ENCODE measurements at regions of chr12 and their contacts with region 1.

Region 1: GRCh38 chr12:4011597-4011996 is 138.4 kb upstream of the PARP11 start:
- DNase-seq: peak; percentile 98
- ATAC-seq: peak; percentile 55
- H3K4me3 ChIP-seq: peak overlapping the region in 1 of 3 experiments; percentile 46; a peak in 2 of 6 replicates
- H3K27ac ChIP-seq: peak overlapping the region; percentile 99
- H3K4me1 ChIP-seq: peaks cover 95% of the 10 kb centered on the region
- H3K27me3 ChIP-seq: no peaks in the 10 kb centered on the region
- CTCF ChIP-seq: peak; percentile 25
- EP300 ChIP-seq: peak; percentile 88 to 98; a peak in 3 of 4 replicates
- POLR2A ChIP-seq: peak; percentile 58 to 62
- RAD21 ChIP-seq: no peak

Region 2: DNA sequence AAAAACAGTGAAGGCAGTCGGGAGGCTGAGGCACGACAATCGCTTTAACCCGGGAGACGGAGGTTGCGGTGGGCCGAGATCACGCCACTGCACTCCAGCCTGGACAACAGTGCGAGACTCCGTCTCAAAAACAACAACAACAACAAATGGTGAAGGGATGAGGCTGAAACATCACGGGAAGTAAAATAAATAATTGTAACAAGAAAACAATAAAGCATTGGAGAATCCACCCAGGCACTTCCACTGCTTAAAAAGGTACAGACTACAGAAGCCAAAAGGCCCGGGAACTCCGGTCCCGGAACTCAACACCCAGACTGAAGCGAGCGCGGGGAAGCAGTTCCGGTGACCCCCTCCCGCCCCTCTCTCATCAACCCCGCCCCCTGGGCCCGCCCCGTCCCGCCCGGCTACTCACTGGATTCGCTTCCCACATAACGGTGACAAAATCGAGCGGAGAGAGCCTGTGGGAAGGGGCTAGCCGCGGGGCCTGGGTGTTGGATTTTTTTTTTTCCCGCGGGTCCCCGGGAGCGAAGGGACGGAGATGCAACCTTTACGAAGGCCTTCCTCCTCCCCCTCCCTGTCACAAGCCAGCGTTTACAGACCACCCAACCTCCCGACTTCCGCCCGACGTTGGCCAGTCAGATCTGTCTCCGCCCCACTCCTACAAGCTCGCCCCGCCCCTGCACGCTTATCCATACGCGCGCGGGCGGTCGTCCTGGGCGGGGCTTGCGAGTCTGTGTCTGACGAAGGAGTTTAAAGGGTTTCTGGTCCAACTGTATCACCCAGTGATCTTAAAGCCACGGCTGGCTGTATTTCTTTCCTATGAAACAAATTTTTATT is 138.6 kb before region 1 on chr12 and contains the start of gene PARP11:
- CTCF ChIA-PET with region 1: no interaction called
- POLR2A ChIA-PET with region 1: interaction called, 9 read pairs
- in situ Hi-C with region 1: no loop called
- intact Hi-C with region 1: loop called (anchors 10 kb)
- DNase-seq: peak; percentile 91
- ATAC-seq: peak; percentile 99
- H3K4me3 ChIP-seq: peak within 1 kb of the TSS; percentile 71 to 97 (median 88)
- H3K27ac ChIP-seq: peak within 1 kb of the TSS; percentile 89
- H3K4me1 ChIP-seq: peaks cover 32% of the 10 kb centered on the region
- H3K27me3 ChIP-seq: no peaks in the 10 kb centered on the region; a peak in 1 of 5 replicates
- CTCF ChIP-seq: no peak
- EP300 ChIP-seq: 0 out of 4 replicates have a peak, but pooled peaks of 1 of the 2 experiments have one; percentile 4
- POLR2A ChIP-seq: peak; percentile 59 to 71; a peak in 3 of 4 replicates
- RAD21 ChIP-seq: no peak
- total RNA-seq, gene PARP11: 7.6 and 11.5 TPM in 2 replicates

Region 3: DNA sequence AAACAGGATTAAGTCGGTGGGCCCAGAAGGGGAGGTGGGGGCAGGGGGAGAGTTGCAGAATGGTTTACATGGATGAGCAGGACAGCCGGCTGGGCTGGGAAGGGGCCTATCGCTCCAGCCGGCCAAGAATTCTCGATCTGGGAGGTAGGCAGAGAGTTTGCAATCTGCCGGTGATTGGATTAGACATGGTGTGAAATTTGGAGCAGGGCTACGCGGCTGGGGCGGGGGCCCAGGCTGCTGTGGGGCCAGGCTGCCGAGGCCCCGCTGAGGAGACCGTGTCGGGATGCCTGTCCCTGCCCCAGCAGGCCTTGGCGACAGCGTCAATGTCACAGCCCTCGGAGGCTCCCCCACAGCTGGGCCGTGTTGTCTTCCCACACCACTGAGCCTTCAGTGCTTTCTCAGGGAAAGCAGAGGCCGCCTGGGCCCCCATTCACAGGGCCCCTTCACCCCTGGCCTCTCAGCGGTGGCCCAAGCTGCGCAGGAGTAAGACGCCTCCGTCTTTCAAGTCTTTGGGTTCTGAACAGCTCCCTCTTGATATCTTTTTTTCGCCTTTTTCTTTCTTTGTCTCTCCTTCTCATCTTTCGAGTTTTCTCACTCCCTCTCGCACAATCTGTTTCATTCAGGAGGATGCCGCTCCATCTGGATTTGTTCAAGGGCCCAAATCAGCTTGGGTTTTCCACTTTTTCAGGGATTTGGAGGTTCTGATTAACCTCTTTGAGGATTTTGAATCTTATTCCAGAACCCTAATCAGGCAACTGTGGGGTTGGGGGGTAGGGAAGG is 20.9 kb before region 1 on chr12:
- CTCF ChIA-PET with region 1: no interaction called
- POLR2A ChIA-PET with region 1: interaction called, 30 read pairs
- in situ Hi-C with region 1: no loop called
- intact Hi-C with region 1: no loop called
- DNase-seq: no peak
- ATAC-seq: no peak
- H3K4me3 ChIP-seq: no peak overlapping the region
- H3K27ac ChIP-seq: no peak overlapping the region
- H3K4me1 ChIP-seq: peaks cover 29% of the 10 kb centered on the region
- H3K27me3 ChIP-seq: no peaks in the 10 kb centered on the region; a peak in 1 of 5 replicates
- CTCF ChIP-seq: no peak
- EP300 ChIP-seq: no peak
- POLR2A ChIP-seq: no peak
- RAD21 ChIP-seq: no peak

Region 4: GRCh38 chr12:3998968-3999826 is 12.4 kb before region 1 on chr12:
- CTCF ChIA-PET with region 1: no interaction called
- POLR2A ChIA-PET with region 1: interaction called, 135 read pairs
- in situ Hi-C with region 1: no loop called
- intact Hi-C with region 1: loop called (anchors 2 kb)
- DNase-seq: peak; percentile 88
- ATAC-seq: peak; percentile 86
- H3K4me3 ChIP-seq: no peak overlapping the region; a peak in 1 of 6 replicates
- H3K27ac ChIP-seq: peak overlapping the region; percentile 89
- H3K4me1 ChIP-seq: peaks cover 52% of the 10 kb centered on the region
- H3K27me3 ChIP-seq: no peaks in the 10 kb centered on the region
- CTCF ChIP-seq: no peak
- EP300 ChIP-seq: peak; percentile 53 to 67; a peak in 2 of 4 replicates
- POLR2A ChIP-seq: 0 out of 4 replicates have a peak, but pooled peaks of 1 of the 2 experiments have one; percentile 27
- RAD21 ChIP-seq: no peak

Region 5: GRCh38 chr12:4030929-4031702 is 19.5 kb after region 1 on chr12:
- CTCF ChIA-PET with region 1: no interaction called
- POLR2A ChIA-PET with region 1: interaction called, 87 read pairs
- in situ Hi-C with region 1: no loop called
- intact Hi-C with region 1: loop called (anchors 2 kb)
- DNase-seq: peak; percentile 55
- ATAC-seq: peak; percentile 42
- H3K4me3 ChIP-seq: no peak overlapping the region
- H3K27ac ChIP-seq: no peak overlapping the region
- H3K4me1 ChIP-seq: peaks cover 58% of the 10 kb centered on the region
- H3K27me3 ChIP-seq: no peaks in the 10 kb centered on the region
- CTCF ChIP-seq: no peak
- EP300 ChIP-seq: no peak
- POLR2A ChIP-seq: no peak
- RAD21 ChIP-seq: no peak

Region 6: GRCh38 chr12:4037747-4038312 is 26.2 kb after region 1 on chr12:
- CTCF ChIA-PET with region 1: no interaction called
- POLR2A ChIA-PET with region 1: interaction called, 14 read pairs
- in situ Hi-C with region 1: no loop called
- intact Hi-C with region 1: loop called (anchors 2 kb)
- DNase-seq: peak; percentile 44
- ATAC-seq: peak; percentile 35; the same call in 1 of the 3 replicates
- H3K4me3 ChIP-seq: no peak overlapping the region
- H3K27ac ChIP-seq: no peak overlapping the region
- H3K4me1 ChIP-seq: peaks cover 48% of the 10 kb centered on the region
- H3K27me3 ChIP-seq: no peaks in the 10 kb centered on the region
- CTCF ChIP-seq: peak; percentile 78
- EP300 ChIP-seq: no peak
- POLR2A ChIP-seq: no peak
- RAD21 ChIP-seq: peak; percentile 80

Measured in HepG2 (cell line).